ENCODE measurements at regions of chr4 and their contacts with region 1.

Region 1: GRCh38 chr4:59525885-59526284 is 1674.2 kb upstream of the ADGRL3 start:
- DNase-seq: no peak

Region 2: GRCh38 chr4:60020389-60020788 is 494.5 kb after region 1 on chr4:
- intact Hi-C with region 1: loop called (anchors 5 kb)
- DNase-seq: peak in 1 of 42 donors; percentile 41

Measured in head of caudate nucleus (tissue), 42 donors.